Activated T-helper 2 cell treated with anti-CD3 and anti-CD28 coated beads, Interferon-gamma antibody, Interleukin-2, Interleukin-4, amounts not matched to agents 10 μg/mL and 5 μg/mL and 100 μg/mL, durations not matched to agents 14 hours and 24 hours and 36 hours (primary cell): ENCODE measurements at regions of chr6 and their contacts with region 1.

Region 1: GRCh38 chr6:41846666-41847237 is 48.4 kb downstream of the USP49 start:
- DNase-seq: peak; percentile 21
- H3K4me3 Mint-ChIP-seq: no peak overlapping the region
- H3K27ac Mint-ChIP-seq: no peak overlapping the region
- H3K4me1 Mint-ChIP-seq: peaks cover 19% of the 10 kb centered on the region
- H3K27me3 Mint-ChIP-seq: no peaks in the 10 kb centered on the region

Region 2: DNA sequence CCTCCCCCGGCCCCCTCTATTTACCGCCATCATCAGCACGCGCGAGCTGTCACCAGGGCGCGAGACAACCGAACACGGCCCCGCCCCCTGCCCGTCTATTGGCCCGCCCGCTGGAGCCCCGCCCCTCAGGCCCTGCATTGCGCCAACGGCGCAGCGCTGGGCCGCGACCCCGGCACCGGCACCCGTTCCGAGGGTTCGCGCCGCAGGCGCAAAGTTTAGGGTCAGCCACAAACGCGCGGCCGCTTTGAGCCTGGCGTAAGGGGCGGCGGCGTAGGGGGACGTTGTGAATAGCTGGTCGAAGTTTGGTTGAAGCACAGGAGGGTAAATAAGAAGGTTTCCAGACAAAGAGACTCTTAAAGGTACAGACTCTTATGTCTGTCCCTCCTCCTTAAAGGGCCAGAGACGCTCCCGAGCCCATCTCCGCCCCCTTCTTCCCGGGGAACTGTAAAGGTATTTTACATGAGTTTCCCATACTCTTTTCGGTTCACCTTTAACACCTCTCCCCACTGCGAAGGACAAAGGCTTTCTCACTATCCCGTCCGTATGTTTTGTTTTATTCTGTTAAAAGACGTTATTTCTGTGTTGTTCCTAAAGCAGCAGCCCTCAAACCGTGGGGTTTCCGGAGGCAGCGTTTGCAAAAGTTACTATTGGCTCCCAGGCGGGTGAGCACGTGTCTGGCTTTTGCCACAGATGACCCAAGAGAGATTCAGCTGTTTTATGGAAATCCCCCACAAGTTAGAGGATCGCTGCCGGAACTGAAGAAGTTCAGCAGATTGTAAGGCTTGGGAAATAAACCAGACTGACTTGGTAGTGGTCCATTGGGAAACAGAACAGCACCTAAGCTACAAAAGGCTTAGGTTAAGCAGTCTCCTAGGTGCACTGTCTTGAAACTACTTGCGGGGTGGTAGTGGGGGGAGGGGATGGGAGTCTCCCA is 48.8 kb after region 1 on chr6 and contains the start of gene USP49:
- intact Hi-C with region 1: loop called (anchors 5 kb)
- DNase-seq: peak; percentile 86
- H3K4me3 Mint-ChIP-seq: no peak within 1 kb of the TSS
- H3K27ac Mint-ChIP-seq: peak within 1 kb of the TSS; percentile 88
- H3K4me1 Mint-ChIP-seq: peaks cover 8% of the 10 kb centered on the region
- H3K27me3 Mint-ChIP-seq: no peaks in the 10 kb centered on the region
- total RNA-seq, gene USP49: 6.1 and 6.4 TPM in 2 replicates

Region 3: GRCh38 chr6:42166444-42167141 is 319.8 kb after region 1 on chr6:
- intact Hi-C with region 1: loop called (anchors 5 kb)
- DNase-seq: peak; percentile 64
- H3K4me3 Mint-ChIP-seq: no peak overlapping the region
- H3K27ac Mint-ChIP-seq: no peak overlapping the region
- H3K4me1 Mint-ChIP-seq: no peaks in the 10 kb centered on the region
- H3K27me3 Mint-ChIP-seq: peaks cover 6% of the 10 kb centered on the region

Region 4: GRCh38 chr6:42177514-42178364 is 331.0 kb after region 1 on chr6:
- intact Hi-C with region 1: no loop called
- DNase-seq: no peak
- H3K4me3 Mint-ChIP-seq: no peak overlapping the region
- H3K27ac Mint-ChIP-seq: no peak overlapping the region
- H3K4me1 Mint-ChIP-seq: peaks cover 10% of the 10 kb centered on the region
- H3K27me3 Mint-ChIP-seq: no peaks in the 10 kb centered on the region